ENCODE measurements at regions of chr15 and their contacts with region 1.

Region 1: GRCh38 chr15:101652098-101652782 is at the start of gene TM2D3:
- DNase-seq: peak; percentile 75 to 92 (median 90)
- H3K4me3 ChIP-seq: peak within 1 kb of the TSS; percentile 58 to 100 (median 91)
- H3K27ac ChIP-seq: peak within 1 kb of the TSS; percentile 82 to 99 (median 97)
- H3K27me3 ChIP-seq: no peaks in the 10 kb centered on the region
- CTCF ChIP-seq: peak; percentile 41 to 93 (median 80)
- total RNA-seq, gene TM2D3: 50.8 to 137 (median 106) TPM

Region 2: DNA sequence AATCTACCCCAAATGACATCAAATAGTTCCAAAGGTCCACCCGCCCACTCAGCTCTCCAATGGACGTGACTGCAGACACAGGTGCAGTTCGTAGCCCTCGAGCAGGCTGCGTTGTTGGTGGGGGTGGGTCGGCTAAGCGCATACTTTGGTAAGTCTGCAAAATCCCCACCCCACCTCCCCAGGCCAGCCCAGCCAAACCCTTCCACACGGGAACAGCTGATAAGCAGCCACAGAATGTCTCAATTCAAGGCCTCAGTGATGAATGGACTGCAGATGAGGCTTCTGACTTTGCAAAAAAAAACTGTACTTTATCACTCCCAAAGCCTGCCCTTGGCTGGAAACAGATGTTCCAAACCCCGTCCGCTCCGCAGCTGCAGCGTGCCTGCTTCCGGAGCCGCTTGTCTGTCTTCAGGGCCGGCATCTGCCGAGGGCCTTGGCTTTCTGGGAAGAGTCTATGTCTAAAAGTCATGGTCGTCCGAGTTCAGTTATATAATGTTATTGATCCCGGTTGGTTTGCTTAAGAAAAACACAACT is 200.9 kb before region 1 on chr15:
- intact Hi-C with region 1: no loop called
- DNase-seq: peak in 3 of 10 donors; percentile 38 to 59 (median 45)
- H3K4me3 ChIP-seq: peak overlapping the region in 3 of 59 donors; percentile 13 to 28 (median 21)
- H3K27ac ChIP-seq: peak overlapping the region in 45 of 59 donors; percentile 6 to 96 (median 61)
- H3K27me3 ChIP-seq: no peaks in the 10 kb centered on the region
- CTCF ChIP-seq: peak in 4 of 56 donors; percentile 13 to 18 (median 18)

Region 3: DNA sequence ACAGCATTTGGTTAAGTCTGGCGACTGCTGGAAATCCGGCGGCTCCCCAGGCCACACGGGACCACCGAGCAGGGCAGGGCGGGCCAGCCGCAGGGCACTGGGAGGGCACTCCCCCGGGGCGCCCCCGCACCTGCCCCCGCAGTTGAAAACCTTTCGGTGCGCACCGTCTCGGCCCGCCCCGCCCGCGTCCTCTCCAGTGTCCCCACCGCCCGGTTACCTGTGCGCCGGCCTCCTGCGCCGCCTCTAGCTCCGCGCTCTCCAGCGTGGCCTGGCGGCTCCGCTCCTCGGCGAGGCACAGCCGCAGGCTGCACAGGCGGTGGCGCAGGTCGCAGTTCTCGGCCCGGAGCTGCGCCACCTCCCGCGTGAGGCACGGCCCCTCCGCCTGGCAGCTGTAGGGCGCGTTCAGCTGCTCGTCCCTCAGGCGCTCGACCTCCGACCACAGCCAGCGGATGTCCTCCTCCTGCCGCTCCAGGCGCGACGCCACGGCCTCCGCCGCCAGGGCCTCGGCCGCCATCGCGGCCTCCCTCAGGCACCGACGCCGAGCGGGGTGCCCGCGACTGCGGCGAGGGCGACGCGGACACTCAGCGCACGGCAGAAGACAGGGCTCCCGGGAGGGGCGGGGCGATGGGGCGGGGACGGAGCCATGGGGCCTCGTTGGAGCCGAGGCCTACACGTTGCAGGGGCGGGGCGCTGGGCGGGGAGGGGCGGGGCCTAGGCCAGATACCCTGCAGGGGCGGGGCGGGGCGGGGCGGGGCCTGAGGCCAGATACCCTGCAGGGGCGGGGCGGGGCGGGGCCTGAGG is 71.8 kb after region 1 on chr15 and contains the start of gene TARS3:
- intact Hi-C with region 1: loop called (anchors 2 to 10 kb)
- DNase-seq: peak; percentile 91 to 96 (median 94)
- H3K4me3 ChIP-seq: peak within 1 kb of the TSS; percentile 65 to 98 (median 90)
- H3K27ac ChIP-seq: peak within 1 kb of the TSS in 57 of 59 donors; percentile 32 to 94 (median 86)
- H3K27me3 ChIP-seq: no peaks in the 10 kb centered on the region
- CTCF ChIP-seq: peak in 24 of 56 donors; percentile 8 to 62 (median 24)
- total RNA-seq, gene TARS3: 33.7 to 81.2 (median 49.6) TPM

Measured in dorsolateral prefrontal cortex (tissue), 120 donors.